Right ventricle myocardium superior (tissue), 1 donor: ENCODE measurements at regions of chr4 and their contacts with region 1.

Region 1: GRCh38 chr4:186021461-186022167 is 47.3 kb upstream of the TLR3 start:
- DNase-seq: peak; percentile 42
- ATAC-seq: peak; percentile 80

Region 2: GRCh38 chr4:185774845-185775680 is 246.6 kb before region 1 on chr4:
- intact Hi-C with region 1: loop called (anchors 10 kb)
- DNase-seq: no peak
- ATAC-seq: peak; percentile 47